GM12878 (cell line): ENCODE measurements at regions of chr6 and their contacts with region 1.

Region 1: GRCh38 chr6:24581084-24581669 is 64.8 kb downstream of the KIAA0319 start:
- DNase-seq: no peak
- ATAC-seq: peak; percentile 97
- H3K4me3 ChIP-seq: no peak overlapping the region
- H3K27ac ChIP-seq: no peak overlapping the region
- H3K4me1 ChIP-seq: no peaks in the 10 kb centered on the region
- H3K27me3 ChIP-seq: no peaks in the 10 kb centered on the region
- CTCF ChIP-seq: peak; percentile 79 to 89 (median 86)
- EP300 ChIP-seq: no peak
- POLR2A ChIP-seq: no peak
- RAD21 ChIP-seq: peak; percentile 73

Region 2: DNA sequence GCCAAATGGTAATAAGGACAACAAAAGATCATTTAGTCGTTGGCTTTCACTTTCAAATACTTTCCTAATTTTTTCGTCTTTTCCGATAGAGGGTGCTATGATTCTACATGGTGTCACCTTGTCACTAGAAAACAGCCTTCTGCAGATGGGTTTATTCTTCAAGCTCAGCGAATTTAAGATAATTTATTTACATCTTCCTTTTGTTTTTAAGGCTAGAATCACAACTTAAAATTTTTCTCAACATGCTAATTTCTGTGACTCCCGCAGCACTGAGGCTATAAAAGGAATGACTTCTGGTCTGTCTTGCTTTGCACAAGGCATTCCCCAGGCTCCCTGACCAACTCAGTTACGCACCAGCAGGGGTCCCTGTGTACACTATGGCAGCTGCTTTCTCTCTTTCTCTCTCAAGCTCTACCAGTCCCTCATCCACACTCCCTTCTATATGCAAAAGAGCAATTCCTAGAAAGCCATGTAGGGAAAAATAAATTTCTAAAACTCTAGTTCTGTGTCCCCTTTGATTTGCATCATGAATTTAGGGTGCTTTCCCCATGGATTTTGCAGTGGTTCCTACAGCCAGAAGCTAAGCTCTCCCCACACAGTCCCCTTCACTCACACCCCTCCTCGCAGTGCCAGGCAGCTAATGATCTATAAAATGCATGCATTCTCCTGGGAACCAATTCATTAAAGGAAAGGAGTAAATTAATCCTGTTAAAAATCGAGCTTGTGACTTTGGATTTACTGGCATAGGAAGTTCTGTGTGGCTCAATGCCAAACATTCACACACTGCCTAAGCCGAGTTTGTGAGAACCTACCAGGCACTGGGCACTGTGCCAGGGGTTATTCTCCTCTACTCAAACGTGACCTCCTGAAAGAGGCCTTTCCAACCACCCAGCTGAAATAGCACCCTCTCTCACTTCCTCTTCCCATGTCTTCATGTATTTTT is 297.9 kb before region 1 on chr6:
- CTCF ChIA-PET with region 1: interaction called, 11 read pairs
- POLR2A ChIA-PET with region 1: no interaction called
- RAD21 ChIA-PET with region 1: interaction called, 6 read pairs
- SMC1A ChIA-PET with region 1: no interaction called
- in situ Hi-C with region 1: no loop called
- intact Hi-C with region 1: loop called (anchors 5 kb)
- DNase-seq: peak; percentile 59
- ATAC-seq: peak; percentile 95
- H3K4me3 ChIP-seq: no peak overlapping the region
- H3K27ac ChIP-seq: no peak overlapping the region
- H3K4me1 ChIP-seq: peaks cover 5% of the 10 kb centered on the region; the same call in 1 of the 2 replicates
- H3K27me3 ChIP-seq: peaks cover 0 to 2% of the 10 kb centered on the region in 2 experiments; a peak in 1 of 4 replicates
- CTCF ChIP-seq: peak; percentile 44 to 57 (median 52)
- EP300 ChIP-seq: 0 out of 4 replicates have a peak, but pooled peaks of 1 of the 2 experiments have one; percentile 37
- POLR2A ChIP-seq: no peak
- RAD21 ChIP-seq: peak; percentile 76

Region 3: GRCh38 chr6:24520929-24521546 is 60.1 kb before region 1 on chr6:
- CTCF ChIA-PET with region 1: interaction called, 118 read pairs
- POLR2A ChIA-PET with region 1: no interaction called
- RAD21 ChIA-PET with region 1: interaction called, 11 read pairs
- SMC1A ChIA-PET with region 1: interaction called, 34 read pairs
- in situ Hi-C with region 1: no loop called
- intact Hi-C with region 1: loop called (anchors 1 kb)
- DNase-seq: no peak
- ATAC-seq: peak; percentile 76
- H3K4me3 ChIP-seq: no peak overlapping the region
- H3K27ac ChIP-seq: peak overlapping the region; percentile 15; the same call in 1 of the 2 replicates
- H3K4me1 ChIP-seq: peaks cover 28% of the 10 kb centered on the region
- H3K27me3 ChIP-seq: no peaks in the 10 kb centered on the region
- CTCF ChIP-seq: peak; percentile 76 to 87 (median 78)
- EP300 ChIP-seq: no peak
- POLR2A ChIP-seq: no peak
- RAD21 ChIP-seq: peak; percentile 50

Region 4: GRCh38 chr6:24595512-24596217 is 14.5 kb after region 1 on chr6:
- CTCF ChIA-PET with region 1: interaction called, 39 read pairs
- POLR2A ChIA-PET with region 1: no interaction called
- RAD21 ChIA-PET with region 1: interaction called, 9 read pairs
- SMC1A ChIA-PET with region 1: interaction called, 8 read pairs
- in situ Hi-C with region 1: no loop called
- intact Hi-C with region 1: no loop called
- DNase-seq: no peak
- ATAC-seq: no peak
- H3K4me3 ChIP-seq: no peak overlapping the region
- H3K27ac ChIP-seq: no peak overlapping the region
- H3K4me1 ChIP-seq: no peaks in the 10 kb centered on the region
- H3K27me3 ChIP-seq: no peaks in the 10 kb centered on the region; a peak in 1 of 4 replicates
- CTCF ChIP-seq: no peak
- EP300 ChIP-seq: no peak
- POLR2A ChIP-seq: no peak
- RAD21 ChIP-seq: no peak

Region 5: GRCh38 chr6:24699521-24700359 is 118.6 kb after region 1 on chr6:
- CTCF ChIA-PET with region 1: interaction called, 35 read pairs
- POLR2A ChIA-PET with region 1: interaction called, 6 read pairs
- RAD21 ChIA-PET with region 1: interaction called, 9 read pairs
- SMC1A ChIA-PET with region 1: interaction called, 12 read pairs
- in situ Hi-C with region 1: loop called (anchors 5 kb)
- intact Hi-C with region 1: loop called (anchors 1 kb)
- DNase-seq: no peak
- ATAC-seq: no peak
- H3K4me3 ChIP-seq: no peak overlapping the region
- H3K27ac ChIP-seq: no peak overlapping the region
- H3K4me1 ChIP-seq: no peaks in the 10 kb centered on the region
- H3K27me3 ChIP-seq: no peaks in the 10 kb centered on the region
- CTCF ChIP-seq: no peak
- EP300 ChIP-seq: no peak
- POLR2A ChIP-seq: no peak
- RAD21 ChIP-seq: no peak

Region 6: GRCh38 chr6:24766680-24767462 is 185.7 kb after region 1 on chr6:
- CTCF ChIA-PET with region 1: interaction called, 45 read pairs
- POLR2A ChIA-PET with region 1: no interaction called
- RAD21 ChIA-PET with region 1: interaction called, 7 read pairs
- SMC1A ChIA-PET with region 1: interaction called, 16 read pairs
- in situ Hi-C with region 1: loop called (anchors 5 kb)
- intact Hi-C with region 1: loop called (anchors 1 kb)
- DNase-seq: no peak
- ATAC-seq: peak; percentile 86
- H3K4me3 ChIP-seq: no peak overlapping the region
- H3K27ac ChIP-seq: no peak overlapping the region
- H3K4me1 ChIP-seq: no peaks in the 10 kb centered on the region
- H3K27me3 ChIP-seq: no peaks in the 10 kb centered on the region
- CTCF ChIP-seq: peak; percentile 24 to 68 (median 45); a peak in 3 of 6 replicates
- EP300 ChIP-seq: no peak
- POLR2A ChIP-seq: no peak
- RAD21 ChIP-seq: peak; percentile 75

Region 7: GRCh38 chr6:24864343-24864742 is 283.2 kb after region 1 on chr6:
- CTCF ChIA-PET with region 1: no interaction called
- POLR2A ChIA-PET with region 1: no interaction called
- RAD21 ChIA-PET with region 1: no interaction called
- SMC1A ChIA-PET with region 1: no interaction called
- in situ Hi-C with region 1: no loop called
- intact Hi-C with region 1: no loop called
- DNase-seq: no peak
- ATAC-seq: no peak
- H3K4me3 ChIP-seq: no peak overlapping the region
- H3K27ac ChIP-seq: no peak overlapping the region
- H3K4me1 ChIP-seq: peaks cover 14% of the 10 kb centered on the region
- H3K27me3 ChIP-seq: no peaks in the 10 kb centered on the region
- CTCF ChIP-seq: no peak
- EP300 ChIP-seq: no peak
- POLR2A ChIP-seq: no peak
- RAD21 ChIP-seq: no peak